WTC11 (cell line): ENCODE measurements at regions of chr12 and their contacts with region 1.

Region 1: GRCh38 chr12:51238510-51239334 is at the start of gene DAZAP2:
- DNase-seq: peak; percentile 97
- ATAC-seq: peak; percentile 94
- H3K4me3 Mint-ChIP-seq: peak within 1 kb of the TSS; percentile 95
- H3K27ac Mint-ChIP-seq: peak within 1 kb of the TSS; percentile 99
- H3K4me1 Mint-ChIP-seq: peaks cover 10% of the 10 kb centered on the region
- H3K27me3 Mint-ChIP-seq: no peaks in the 10 kb centered on the region
- CTCF ChIP-seq: no peak
- total RNA-seq, gene DAZAP2: 30.4 to 35.8 TPM (median 33.0 TPM) in 3 replicates

Region 2: DNA sequence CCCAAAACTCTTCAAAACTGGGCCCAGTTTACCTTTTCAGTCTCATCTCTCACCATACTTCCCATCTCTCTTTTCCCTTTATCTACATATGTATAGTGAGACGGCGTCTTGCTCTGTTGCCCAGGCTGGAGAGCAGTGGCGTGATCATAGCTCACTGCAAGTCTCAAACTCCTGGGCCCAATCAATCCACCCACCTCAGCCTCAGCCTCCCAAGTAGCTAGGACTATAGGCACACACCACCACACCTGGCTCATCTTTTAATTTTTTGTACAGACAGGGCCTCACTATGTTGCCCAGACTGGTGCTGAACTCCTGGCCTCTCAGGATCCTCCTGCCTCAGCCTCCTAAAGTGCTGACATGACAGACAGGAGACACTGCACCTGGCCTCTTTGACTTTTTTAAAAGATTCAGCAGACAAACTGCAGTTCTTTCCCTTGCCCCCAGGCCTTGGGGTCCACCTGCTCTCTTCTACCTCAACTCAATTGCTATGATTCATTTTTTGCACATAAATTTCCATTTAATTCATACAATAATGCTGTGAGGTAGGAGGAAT is 99.4 kb before region 1 on chr12:
- CTCF ChIA-PET with region 1: no interaction called
- POLR2A ChIA-PET with region 1: interaction called, 10 read pairs
- DNase-seq: no peak
- ATAC-seq: no peak
- H3K4me3 Mint-ChIP-seq: no peak overlapping the region
- H3K27ac Mint-ChIP-seq: peak overlapping the region; percentile 86; the same call in 1 of the 2 replicates
- H3K4me1 Mint-ChIP-seq: no peaks in the 10 kb centered on the region
- H3K27me3 Mint-ChIP-seq: no peaks in the 10 kb centered on the region
- CTCF ChIP-seq: no peak

Region 3: GRCh38 chr12:51293696-51294095 is 55.0 kb after region 1 on chr12:
- CTCF ChIA-PET with region 1: no interaction called
- POLR2A ChIA-PET with region 1: no interaction called
- DNase-seq: no peak
- ATAC-seq: no peak
- H3K4me3 Mint-ChIP-seq: no peak overlapping the region
- H3K27ac Mint-ChIP-seq: no peak overlapping the region
- H3K4me1 Mint-ChIP-seq: no peaks in the 10 kb centered on the region
- H3K27me3 Mint-ChIP-seq: no peaks in the 10 kb centered on the region
- CTCF ChIP-seq: no peak